Heart right ventricle (tissue), 16 donors: ENCODE measurements at regions of chr12 and their contacts with region 1.

Region 1: DNA sequence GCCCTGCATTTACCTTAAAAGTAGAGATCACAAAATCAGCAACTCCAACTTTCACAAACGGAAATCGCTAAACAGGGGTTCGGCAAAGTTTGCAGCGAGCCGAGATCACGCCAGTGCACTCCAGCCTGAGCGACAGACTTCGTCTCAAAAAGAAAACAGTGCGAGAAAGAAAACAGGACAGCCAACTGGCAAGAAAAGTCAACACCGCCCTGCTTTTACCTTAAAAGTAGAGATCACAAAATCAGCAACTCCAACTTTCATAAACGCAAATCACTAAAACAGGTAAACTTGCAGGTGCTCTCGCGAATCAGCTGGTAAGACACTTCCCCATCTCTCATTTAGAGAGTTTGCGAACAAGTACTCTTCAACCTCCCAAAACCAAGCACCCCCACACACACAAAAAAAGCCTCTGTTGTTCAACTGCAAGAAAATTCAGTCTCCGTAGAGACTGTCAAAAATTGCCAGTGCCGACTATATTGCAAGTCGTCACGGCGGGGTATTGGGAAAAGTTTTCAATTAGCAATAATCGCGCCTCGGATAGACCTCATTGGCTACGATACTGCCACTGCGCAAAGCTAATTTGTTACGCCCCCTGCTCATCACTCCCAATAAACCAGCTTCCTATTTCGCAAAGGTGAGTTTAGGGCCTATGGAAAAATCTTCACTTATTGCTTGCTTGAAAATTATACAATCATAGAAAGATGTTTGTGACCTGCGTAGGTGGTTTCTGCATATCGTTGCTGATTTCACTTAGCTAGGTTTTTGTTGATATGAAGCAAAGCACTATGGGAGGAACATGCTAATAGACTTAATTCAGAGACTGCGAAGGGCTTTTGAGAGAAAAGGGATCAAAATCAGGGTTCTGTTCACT is at the start of gene RNU4-1:
- DNase-seq: peak; percentile 29 to 81
- ATAC-seq: peak; percentile 42 to 77 (median 58)
- H3K4me3 ChIP-seq: peak within 1 kb of the TSS; percentile 11 to 67 (median 61)
- H3K27ac ChIP-seq: peak within 1 kb of the TSS; percentile 91 to 100 (median 98)
- H3K4me1 ChIP-seq: peaks cover 0 to 28% (median 8%) of the 10 kb centered on the region in 9 donors
- H3K27me3 ChIP-seq: no peaks in the 10 kb centered on the region
- CTCF ChIP-seq: no peak
- total RNA-seq, gene RNU4-1: 426 to 3,423 (median 1,870) TPM

Region 2: GRCh38 chr12:120116792-120117651 is 175.9 kb before region 1 on chr12:
- intact Hi-C with region 1: loop called in 1 of 10 experiments (anchors 10 kb)
- DNase-seq: peak; percentile 95 to 97
- ATAC-seq: peak; percentile 92 to 98 (median 95)
- H3K4me3 ChIP-seq: peak overlapping the region; percentile 67 to 93 (median 82)
- H3K27ac ChIP-seq: peak overlapping the region; percentile 93 to 99 (median 96)
- H3K4me1 ChIP-seq: peaks cover 13 to 77% (median 44%) of the 10 kb centered on the region in 9 donors
- H3K27me3 ChIP-seq: no peaks in the 10 kb centered on the region
- CTCF ChIP-seq: no peak

Region 3: DNA sequence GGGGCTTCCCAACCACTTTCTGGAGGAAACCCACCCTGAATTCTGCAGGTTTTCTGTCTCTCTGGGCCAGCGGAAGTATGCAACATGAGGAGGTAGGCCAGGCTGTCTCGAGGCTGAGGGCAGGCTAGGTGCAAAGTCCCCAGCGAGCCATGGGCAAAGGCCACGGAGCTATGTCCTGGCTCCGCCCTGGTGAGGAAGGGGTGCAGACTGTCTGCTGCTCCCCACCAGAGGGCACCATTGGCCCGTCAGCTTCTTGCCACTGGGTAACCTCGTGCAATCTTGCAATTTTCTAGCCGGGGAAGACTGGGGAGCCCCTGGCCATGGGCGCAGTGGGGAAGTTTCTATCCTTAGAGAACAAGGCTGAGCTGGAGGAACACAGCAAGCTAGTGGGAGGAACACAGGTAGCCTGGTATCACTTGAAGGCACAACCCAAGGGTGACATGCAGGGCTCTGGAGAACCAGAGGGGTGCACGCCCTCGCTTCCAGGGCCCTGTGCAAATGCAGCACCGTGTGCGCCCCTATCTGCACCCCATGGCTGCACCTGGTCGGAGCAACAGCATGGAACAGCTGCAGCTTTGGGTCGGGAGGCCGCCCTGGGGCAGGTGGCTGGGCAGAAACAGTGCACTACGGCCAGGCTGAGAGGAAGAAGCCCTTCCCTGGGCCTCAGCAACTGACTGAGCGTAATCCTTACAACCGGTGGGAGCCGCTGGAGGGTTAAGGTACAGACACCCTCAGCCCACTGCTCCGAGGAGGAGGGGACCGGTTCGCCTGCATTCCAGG is 64.4 kb before region 1 on chr12:
- intact Hi-C with region 1: loop called in 1 of 10 experiments (anchors 1 kb)
- DNase-seq: peak; percentile 89 to 90
- ATAC-seq: peak; percentile 60 to 80 (median 72)
- H3K4me3 ChIP-seq: peak overlapping the region in 7 of 10 donors; percentile 1 to 28 (median 21)
- H3K27ac ChIP-seq: peak overlapping the region in 9 of 10 donors; percentile 50 to 96 (median 93)
- H3K4me1 ChIP-seq: peaks cover 65 to 99% (median 92%) of the 10 kb centered on the region in 9 donors
- H3K27me3 ChIP-seq: no peaks in the 10 kb centered on the region
- CTCF ChIP-seq: peak; percentile 84 to 98 (median 96)

Region 4: GRCh38 chr12:120265473-120266179 is 27.3 kb before region 1 on chr12 and contains the start of gene PXN:
- intact Hi-C with region 1: no loop called
- DNase-seq: peak; percentile 87 to 94
- ATAC-seq: peak; percentile 83 to 92 (median 88)
- H3K4me3 ChIP-seq: peak within 1 kb of the TSS; percentile 84 to 99 (median 94)
- H3K27ac ChIP-seq: peak within 1 kb of the TSS; percentile 90 to 99 (median 96)
- H3K4me1 ChIP-seq: peaks cover 23 to 54% (median 43%) of the 10 kb centered on the region in 9 donors
- H3K27me3 ChIP-seq: no peaks in the 10 kb centered on the region
- CTCF ChIP-seq: peak; percentile 84 to 96 (median 88)
- total RNA-seq, gene PXN: 52.0 to 83.7 (median 63.3) TPM